ENCODE measurements at regions of chr11 and their contacts with region 1.

Region 1: DNA sequence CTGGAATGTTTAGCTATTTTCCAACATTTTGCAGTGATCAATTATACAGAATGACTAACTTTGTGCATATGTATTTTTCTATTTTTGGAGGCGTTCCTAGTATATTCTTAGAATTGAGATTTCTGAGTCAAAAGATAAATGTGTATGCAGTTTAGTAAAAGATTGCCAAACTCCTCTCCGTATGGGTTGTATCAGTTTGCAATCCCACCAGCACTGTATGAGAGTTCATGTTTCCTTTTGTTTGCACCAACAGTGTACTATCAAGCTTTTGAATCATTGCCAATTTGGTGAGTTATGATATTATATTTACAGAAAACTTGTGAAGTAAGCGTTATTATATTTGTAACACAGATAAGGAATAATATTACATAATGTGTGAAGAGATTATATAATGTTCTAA is 658.7 kb downstream of the JRKL start:
- DNase-seq: no peak
- ATAC-seq: no peak
- H3K4me3 ChIP-seq: no peak overlapping the region
- H3K27ac ChIP-seq: no peak overlapping the region
- H3K4me1 ChIP-seq: no peaks in the 10 kb centered on the region
- H3K27me3 ChIP-seq: no peaks in the 10 kb centered on the region
- CTCF ChIP-seq: no peak

Region 2: DNA sequence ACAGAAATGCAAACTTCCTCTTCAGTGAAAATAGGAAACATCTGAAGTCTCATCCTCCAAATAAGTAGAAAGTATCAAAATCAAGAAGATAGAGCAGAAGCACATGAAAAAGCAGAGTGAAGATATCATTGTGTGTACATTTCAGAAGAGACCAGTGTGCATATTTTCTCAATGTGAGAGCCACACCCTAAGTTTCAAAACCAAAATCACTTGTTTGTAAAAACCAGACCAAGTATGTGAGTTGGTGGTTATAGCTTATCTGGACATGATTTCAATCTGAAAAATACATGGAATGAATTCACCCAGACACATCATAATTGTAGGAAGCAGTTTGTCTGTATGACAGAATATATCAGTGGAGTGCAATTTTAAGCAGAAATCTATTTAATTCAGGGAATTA is 122.6 kb before region 1 on chr11:
- intact Hi-C with region 1: loop called in 1 of 2 experiments (anchors 5 kb)
- DNase-seq: no peak
- ATAC-seq: no peak
- H3K4me3 ChIP-seq: no peak overlapping the region
- H3K27ac ChIP-seq: no peak overlapping the region
- H3K4me1 ChIP-seq: no peaks in the 10 kb centered on the region
- H3K27me3 ChIP-seq: no peaks in the 10 kb centered on the region
- CTCF ChIP-seq: no peak

Region 3: DNA sequence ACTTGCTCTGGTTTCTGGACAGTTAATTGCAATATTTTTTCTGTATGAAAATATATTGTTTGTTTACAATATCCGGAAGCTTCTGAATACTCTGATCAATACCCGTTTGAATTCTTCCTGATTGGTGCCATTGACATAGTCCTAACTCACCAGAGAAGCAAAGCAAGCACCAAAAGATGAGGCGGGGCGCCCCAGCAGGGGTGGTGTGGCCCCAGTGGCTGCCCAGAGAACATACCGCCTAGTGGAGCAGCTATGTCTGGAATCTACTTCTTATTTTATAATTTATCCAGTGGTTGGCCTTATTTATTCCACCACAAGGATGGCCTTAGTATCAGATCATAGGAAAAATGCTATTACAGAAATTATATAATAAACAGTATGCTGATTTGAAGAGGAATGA is 48.0 kb before region 1 on chr11:
- intact Hi-C with region 1: no loop called
- DNase-seq: no peak
- ATAC-seq: no peak
- H3K4me3 ChIP-seq: no peak overlapping the region
- H3K27ac ChIP-seq: no peak overlapping the region
- H3K4me1 ChIP-seq: no peaks in the 10 kb centered on the region
- H3K27me3 ChIP-seq: no peaks in the 10 kb centered on the region
- CTCF ChIP-seq: no peak